Activated B cell treated with CpG ODN at 0.5 μM for 24 hours (primary cell): ENCODE measurements at regions of chr12 and their contacts with region 1.

Region 1: DNA sequence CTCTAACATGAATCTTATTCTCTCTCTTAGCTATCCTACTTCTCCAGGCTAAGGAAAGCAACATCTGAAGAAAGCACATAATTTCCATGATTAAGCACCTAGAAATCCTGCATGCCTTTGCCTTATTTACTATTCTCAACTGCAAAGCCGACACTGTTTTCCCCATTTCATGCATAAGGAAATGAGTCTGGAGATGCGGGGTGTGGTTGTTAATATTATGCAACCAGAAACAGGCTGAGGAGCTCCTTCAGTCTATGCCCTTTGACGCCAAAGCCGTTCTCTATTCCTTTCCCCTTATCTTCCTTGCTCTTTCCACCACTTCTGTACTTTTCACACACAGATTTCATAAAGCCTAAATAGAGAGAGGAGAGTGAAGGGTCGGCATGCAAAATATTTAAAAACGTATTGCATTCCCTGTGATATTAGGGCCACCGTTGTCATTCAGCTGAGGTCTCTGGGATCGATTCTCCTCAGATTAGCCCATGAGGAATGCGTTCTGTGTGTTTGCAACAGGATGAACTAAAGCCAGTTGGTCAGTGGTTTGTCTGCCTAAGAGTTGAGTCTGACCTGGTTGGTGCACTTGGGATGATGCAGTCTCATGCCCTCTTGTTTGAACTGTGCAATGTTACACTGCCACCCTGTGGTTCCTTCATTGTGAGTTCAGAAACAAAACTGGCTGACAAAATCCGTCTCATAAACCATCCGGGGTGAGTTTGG is 53.1 kb upstream of the PLEKHG7 start:
- DNase-seq: no peak
- ATAC-seq: peak; percentile 78
- H3K4me3 Mint-ChIP-seq: no peak overlapping the region
- H3K27ac Mint-ChIP-seq: no peak overlapping the region
- H3K4me1 Mint-ChIP-seq: peaks cover 6% of the 10 kb centered on the region
- H3K27me3 Mint-ChIP-seq: no peaks in the 10 kb centered on the region
- CTCF ChIP-seq: peak; percentile 26

Region 2: DNA sequence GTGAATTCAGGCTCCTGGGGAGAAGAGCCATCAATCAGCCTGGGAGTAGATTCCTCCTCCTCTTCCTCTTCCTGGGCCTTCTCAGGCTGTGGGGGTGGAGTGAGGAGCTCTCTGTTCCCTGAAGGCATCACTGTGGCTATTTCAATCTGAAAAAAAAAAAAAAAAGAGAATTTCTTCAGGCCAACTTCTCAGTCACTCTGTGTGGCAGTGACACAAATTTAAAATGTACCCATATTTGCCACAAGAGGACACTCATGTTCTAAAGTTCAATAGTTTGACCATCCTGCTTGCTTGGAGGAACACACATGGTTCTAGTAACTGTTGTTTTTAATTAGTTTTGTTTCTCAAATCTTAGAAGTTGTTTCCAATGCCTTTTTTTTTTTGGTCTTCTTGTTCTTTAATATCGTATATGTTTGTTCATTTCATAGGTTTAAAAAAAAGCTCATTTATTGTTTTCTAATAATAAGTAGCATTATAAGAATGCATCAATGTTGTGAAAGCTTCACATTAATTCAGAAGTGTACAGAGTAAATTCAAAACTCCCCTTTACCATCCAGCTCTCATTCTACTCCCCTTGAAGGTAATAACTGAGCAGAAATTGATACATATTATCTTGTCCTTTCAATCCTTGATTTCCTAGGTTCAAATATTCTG is 1671.4 kb before region 1 on chr12:
- CTCF ChIA-PET with region 1: no interaction called
- POLR2A ChIA-PET with region 1: no interaction called
- intact Hi-C with region 1: loop called (anchors 1 kb)
- DNase-seq: no peak
- ATAC-seq: no peak
- H3K4me3 Mint-ChIP-seq: no peak overlapping the region
- H3K27ac Mint-ChIP-seq: no peak overlapping the region
- H3K4me1 Mint-ChIP-seq: no peaks in the 10 kb centered on the region
- H3K27me3 Mint-ChIP-seq: peaks cover 8% of the 10 kb centered on the region
- CTCF ChIP-seq: no peak

Region 3: DNA sequence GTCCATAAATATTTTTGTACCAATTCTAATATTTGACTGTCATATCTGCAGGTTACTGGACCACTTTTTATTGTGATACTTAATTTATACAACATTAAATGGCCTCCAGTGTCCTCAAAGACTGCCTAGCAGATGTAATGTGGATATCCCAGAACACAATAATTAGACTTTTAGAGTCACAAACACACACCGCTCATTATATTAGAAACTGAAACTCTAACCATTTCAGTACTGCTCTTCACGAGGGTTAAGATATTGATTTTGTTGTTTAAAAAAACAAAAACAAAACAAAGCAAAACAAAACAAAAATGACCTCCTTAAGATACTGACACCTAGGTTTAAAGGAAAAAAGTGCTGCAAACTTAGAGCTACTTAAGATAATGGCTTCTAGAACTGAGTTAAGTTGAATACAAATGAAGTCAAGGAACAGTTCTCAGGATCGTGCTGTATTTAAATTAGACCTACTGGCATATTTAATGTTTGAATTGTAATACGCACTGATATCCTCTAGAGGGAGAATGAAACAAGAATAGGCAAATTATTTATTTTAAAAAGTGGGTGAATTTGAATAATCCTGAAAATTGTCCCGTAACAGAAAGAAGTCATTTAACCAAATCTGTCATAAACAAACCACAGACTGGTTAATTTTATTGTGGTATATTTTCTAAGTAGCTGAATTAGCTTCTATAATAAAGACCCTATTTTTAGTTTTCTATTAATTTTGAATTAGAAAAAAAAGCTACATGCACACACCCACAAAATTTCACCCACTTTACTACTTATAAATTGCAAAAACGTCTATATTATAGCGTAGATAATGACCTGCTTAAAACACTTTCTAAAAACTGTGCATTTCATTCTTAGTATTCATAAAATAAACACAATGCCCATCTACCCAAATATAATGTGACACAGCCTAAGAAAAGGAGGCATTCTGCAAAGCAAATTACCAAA is 1071.8 kb before region 1 on chr12:
- CTCF ChIA-PET with region 1: no interaction called
- POLR2A ChIA-PET with region 1: no interaction called
- intact Hi-C with region 1: loop called (anchors 1 kb)
- DNase-seq: no peak
- ATAC-seq: peak; percentile 58
- H3K4me3 Mint-ChIP-seq: peak overlapping the region; percentile 70
- H3K27ac Mint-ChIP-seq: no peak overlapping the region
- H3K4me1 Mint-ChIP-seq: peaks cover 6% of the 10 kb centered on the region
- H3K27me3 Mint-ChIP-seq: peaks cover 7% of the 10 kb centered on the region
- CTCF ChIP-seq: peak; percentile 57

Region 4: DNA sequence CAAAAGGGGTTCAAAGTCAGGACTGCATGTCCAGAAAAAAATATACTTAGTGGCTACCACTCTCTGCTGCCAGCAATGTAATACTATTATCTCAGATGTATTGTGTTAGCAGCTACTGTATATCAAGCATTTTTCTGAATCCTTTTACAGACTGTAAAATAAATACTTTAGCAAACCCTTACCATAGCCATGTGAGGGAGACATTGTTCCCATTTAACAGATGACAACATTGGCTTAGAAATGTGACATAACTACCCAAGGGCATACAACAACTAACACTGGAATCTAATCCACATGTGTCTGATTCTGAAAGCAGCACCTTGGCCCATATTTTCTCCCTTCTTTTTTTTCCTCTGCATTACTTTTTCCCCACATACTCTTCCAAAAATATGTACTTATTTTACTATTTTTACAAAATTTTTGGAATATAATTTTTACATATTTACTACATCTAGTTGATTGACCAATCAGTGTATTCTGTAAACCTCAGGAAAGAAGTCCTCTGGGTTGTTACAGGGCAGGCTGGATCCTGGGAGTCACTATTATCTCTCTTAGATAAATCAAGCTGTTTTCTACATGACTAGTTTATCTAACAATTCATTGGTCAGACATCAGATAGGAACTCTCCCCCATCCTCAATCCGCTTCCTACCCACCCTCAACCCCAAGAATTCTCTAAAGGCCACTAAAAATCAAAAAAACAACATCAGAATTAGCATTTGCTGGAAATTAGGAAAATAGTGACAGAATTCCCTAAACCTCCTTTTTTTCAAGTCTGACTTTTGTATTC is 658.1 kb before region 1 on chr12:
- CTCF ChIA-PET with region 1: no interaction called
- POLR2A ChIA-PET with region 1: no interaction called
- intact Hi-C with region 1: loop called (anchors 5 kb)
- DNase-seq: no peak
- ATAC-seq: peak; percentile 47
- H3K4me3 Mint-ChIP-seq: no peak overlapping the region
- H3K27ac Mint-ChIP-seq: no peak overlapping the region
- H3K4me1 Mint-ChIP-seq: peaks cover 2% of the 10 kb centered on the region
- H3K27me3 Mint-ChIP-seq: no peaks in the 10 kb centered on the region
- CTCF ChIP-seq: no peak

Region 5: GRCh38 chr12:92593734-92594402 is 55.8 kb before region 1 on chr12:
- CTCF ChIA-PET with region 1: interaction called, 4 read pairs
- POLR2A ChIA-PET with region 1: no interaction called
- intact Hi-C with region 1: loop called (anchors 5 kb)
- DNase-seq: peak; percentile 49
- ATAC-seq: peak; percentile 92
- H3K4me3 Mint-ChIP-seq: peak overlapping the region; percentile 75
- H3K27ac Mint-ChIP-seq: peak overlapping the region; percentile 96
- H3K4me1 Mint-ChIP-seq: peaks cover 46% of the 10 kb centered on the region
- H3K27me3 Mint-ChIP-seq: no peaks in the 10 kb centered on the region
- CTCF ChIP-seq: no peak